ENCODE measurements at regions of chr21 and their contacts with region 1.

Region 1: DNA sequence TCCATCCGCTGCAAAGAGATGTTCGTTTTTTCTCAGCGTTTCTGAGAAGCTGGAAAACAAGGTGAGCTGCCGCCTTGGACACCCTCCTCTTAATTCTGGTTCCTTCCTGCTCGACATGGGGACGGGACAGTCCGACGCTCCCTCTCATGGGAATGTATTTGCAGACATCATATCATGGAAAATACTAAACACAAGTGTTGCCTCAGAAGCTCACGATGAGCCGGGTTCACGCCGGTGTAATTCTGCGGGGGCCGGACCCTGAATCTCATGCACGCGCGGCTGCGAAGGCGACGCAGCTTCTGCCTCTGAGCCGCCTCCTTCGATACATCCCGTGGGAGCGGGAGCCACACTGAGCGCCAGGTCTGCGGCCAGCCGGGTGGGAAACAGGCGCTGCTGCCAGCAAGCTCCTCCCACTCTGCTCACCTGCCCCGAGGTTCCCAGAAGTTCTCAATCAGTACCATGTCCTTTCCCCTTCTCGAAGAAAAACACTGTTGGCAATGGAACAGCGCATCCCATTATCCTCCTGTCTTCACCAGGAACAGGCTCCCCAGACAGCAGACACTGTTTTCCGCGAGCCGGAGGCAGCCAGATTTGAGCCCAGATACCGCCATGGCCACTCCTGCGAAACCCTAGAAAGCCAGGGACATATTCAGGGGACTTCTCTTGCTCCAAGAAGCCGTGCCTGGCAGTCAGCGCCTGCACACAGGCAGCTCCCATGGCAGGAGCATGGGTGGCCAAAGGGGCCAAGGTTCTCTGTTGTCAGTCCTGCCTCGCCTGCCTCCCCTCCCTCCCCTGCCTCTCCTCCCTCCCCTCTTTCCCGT is 98.0 kb downstream of the WDR4 start:
- DNase-seq: peak in 2 of 10 donors; percentile 37 to 54
- H3K4me3 ChIP-seq: peak overlapping the region in 57 of 59 donors; percentile 7 to 67 (median 38)
- H3K27ac ChIP-seq: no peak overlapping the region
- H3K27me3 ChIP-seq: peaks cover 0 to 48% (median 7%) of the 10 kb centered on the region in 45 donors
- CTCF ChIP-seq: peak in 12 of 56 donors; percentile 6 to 46 (median 14)

Region 2: DNA sequence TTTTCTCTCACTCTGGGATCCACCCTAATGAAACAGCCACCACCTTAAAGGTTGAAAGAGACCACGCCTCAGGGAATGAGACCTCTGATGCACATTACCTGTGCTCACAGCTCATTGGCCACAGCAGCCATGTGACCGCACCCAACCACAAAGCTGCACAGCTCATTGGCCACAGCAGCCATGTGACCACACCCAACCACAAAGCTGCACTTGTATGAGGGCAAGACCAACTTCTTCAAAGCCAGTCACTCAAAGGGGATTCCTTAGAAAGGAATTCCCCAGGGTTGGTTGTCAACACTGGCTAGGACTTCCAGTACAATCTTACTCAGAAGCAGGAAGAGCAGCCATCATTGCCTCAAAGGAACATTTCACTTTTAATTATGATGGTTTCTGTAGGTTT is 171.5 kb before region 1 on chr21:
- intact Hi-C with region 1: loop called in 1 of 2 experiments (anchors 10 kb)
- DNase-seq: peak in 2 of 10 donors; percentile 2 to 5
- H3K4me3 ChIP-seq: no peak overlapping the region
- H3K27ac ChIP-seq: no peak overlapping the region
- H3K27me3 ChIP-seq: no peaks in the 10 kb centered on the region
- CTCF ChIP-seq: no peak

Region 3: DNA sequence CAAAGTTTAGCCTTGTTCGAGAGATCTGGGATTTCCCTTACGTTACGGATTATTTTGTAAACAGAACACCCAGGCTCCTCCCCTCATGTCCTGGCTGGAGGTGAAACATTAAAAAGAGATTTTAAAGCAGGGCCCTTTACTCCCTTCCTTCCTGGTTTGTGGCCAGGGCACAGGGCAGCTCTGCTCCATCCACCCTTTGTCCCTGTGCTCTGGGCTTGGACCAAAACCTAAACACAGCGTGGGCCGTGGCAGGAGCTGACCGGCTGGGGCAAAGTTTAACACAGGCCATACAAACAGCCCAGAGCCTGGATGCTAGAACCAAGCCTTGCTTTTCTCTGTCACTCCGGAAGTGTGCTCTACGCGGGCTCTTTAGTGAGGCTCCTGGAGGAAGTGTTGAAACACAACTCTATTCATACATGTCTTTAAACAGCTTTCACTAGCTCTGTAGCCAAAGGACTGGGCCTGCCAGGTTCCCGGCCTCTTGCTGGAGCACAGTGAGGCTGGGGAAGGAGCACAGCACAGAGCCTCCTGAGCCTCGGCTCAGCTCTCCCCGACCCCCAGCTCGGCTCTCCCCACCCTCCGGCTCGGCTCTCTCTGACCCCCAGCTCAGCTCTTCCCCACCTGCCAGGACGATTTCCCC is 43.3 kb before region 1 on chr21:
- intact Hi-C with region 1: loop called in 1 of 2 experiments (anchors 5 kb)
- DNase-seq: peak in 3 of 10 donors; percentile 23 to 48 (median 42)
- H3K4me3 ChIP-seq: no peak overlapping the region
- H3K27ac ChIP-seq: peak overlapping the region in 56 of 59 donors; percentile 8 to 88 (median 70)
- H3K27me3 ChIP-seq: peaks cover 0 to 5% (median 0%) of the 10 kb centered on the region in 45 donors
- CTCF ChIP-seq: no peak

Region 4: DNA sequence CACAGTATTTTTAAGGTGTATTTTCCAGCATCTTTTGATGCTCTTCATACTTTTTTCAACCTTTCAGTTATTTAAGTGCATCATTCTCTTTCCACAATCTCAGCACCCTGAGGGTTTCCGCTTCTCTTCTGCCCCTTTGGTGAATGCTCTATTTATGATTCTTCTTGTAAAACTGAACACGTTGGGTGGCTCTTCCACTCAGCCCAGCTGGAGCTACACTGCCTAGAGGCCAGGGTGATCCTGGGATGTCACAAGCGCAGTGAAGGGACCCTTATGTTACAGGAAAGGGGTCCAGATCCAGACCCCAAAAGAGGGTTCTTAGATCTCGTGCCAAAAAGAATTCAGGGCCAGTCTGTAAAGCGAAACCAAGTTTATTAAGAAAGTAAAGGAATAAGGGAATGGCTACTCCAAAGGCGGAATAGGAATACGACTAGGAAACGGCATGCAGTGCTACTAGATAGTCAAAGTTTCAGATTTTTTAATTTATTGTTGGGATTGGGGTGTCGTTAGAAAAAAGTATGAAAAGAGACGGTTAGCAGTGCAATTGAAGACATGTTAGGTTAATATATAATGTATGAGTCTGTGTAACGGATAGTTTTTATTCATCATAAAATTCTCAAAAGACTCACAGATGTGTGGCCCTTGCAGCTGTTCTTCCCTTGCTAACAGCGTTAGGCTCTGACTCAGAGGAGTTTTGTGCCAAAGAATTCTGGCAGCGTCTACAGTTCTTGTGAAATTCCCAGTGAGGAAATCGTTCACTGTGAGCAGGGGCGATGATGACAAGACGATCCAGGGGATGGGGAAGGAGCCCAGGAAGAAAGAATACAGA is 158.4 kb after region 1 on chr21:
- intact Hi-C with region 1: no loop called
- DNase-seq: peak in 8 of 10 donors; percentile 9 to 91 (median 70)
- H3K4me3 ChIP-seq: peak overlapping the region in 53 of 59 donors; percentile 0 to 58 (median 28)
- H3K27ac ChIP-seq: peak overlapping the region in 58 of 59 donors; percentile 16 to 92 (median 82)
- H3K27me3 ChIP-seq: no peaks in the 10 kb centered on the region
- CTCF ChIP-seq: peak in 3 of 56 donors; percentile 3 to 33 (median 12)